CD4-positive, alpha-beta T cell (primary cell): ENCODE measurements at regions of chr15 and their contacts with region 1.

Region 1: DNA sequence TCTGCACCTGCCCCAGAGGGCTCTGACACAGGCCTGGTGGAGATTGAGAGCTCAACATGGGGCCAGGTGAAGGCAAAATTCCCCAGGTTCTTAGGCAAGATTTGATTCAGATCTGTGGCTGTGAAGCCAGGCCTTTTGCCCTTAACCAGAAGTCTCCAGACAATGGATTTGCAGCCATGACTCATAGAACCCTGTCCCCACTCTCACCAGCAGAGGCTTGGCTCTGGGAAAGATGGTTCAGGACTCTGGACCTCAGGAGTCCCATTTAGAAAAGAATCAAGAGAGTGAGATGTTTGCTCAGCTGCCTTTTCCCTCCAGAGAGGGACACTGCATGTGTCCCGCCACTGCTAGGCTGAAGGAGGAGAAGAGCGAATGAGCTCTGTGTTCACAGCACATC is 361.4 kb upstream of the ICE2 start:
- DNase-seq: peak in 4 of 14 experiments; percentile 25 to 61 (median 46)
- ATAC-seq: no peak
- H3K4me3 ChIP-seq: peak overlapping the region; percentile 59
- H3K4me3 Mint-ChIP-seq: peak overlapping the region; percentile 80
- H3K27ac ChIP-seq: peak overlapping the region; percentile 59 to 86
- H3K27ac Mint-ChIP-seq: peak overlapping the region; percentile 84
- H3K4me1 ChIP-seq: peaks cover 78% of the 10 kb centered on the region
- H3K4me1 Mint-ChIP-seq: peaks cover 97% of the 10 kb centered on the region
- H3K27me3 ChIP-seq: no peaks in the 10 kb centered on the region
- H3K27me3 Mint-ChIP-seq: no peaks in the 10 kb centered on the region
- CTCF ChIP-seq: no peak

Region 2: DNA sequence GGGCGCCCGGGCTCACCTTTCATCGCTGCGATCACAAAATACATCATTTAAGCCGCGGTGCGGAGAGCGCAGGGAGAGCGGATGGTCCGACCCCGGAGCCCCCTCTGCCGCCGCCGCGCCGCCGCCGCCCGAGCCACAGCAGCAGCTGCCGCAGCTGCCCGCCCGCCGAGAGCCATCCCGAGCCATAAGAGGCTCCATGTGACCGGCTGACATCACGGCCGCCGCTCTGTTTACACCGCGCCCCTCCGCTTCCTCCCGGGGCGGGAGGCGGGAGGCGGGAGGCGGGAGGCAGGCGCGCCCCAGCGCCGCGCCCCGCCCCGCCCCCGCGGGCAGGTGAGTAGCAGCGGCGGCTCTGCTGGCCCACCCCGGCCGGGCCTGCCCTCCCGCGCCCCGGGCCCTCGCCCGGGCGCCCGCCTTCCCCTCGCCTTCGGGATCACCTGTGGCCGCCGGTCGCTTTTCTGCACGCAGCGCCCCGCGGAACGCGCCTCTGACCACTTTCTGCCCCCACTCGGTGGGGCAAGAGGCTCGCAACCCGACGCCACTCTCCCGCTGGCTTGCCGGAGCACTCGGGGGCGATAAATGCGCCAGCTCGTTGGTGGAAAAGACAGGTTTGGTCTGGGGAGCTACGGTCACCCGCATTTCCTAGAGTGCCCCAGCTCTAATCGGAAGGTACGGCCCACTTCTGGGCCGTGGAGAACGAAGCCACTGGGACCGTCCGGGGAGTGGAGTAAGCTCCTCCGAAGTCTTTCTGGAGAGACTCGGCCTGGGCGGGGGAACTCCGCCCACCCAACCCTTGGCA is 247.7 kb before region 1 on chr15:
- CTCF ChIA-PET with region 1: interaction called, 3 read pairs
- POLR2A ChIA-PET with region 1: interaction called, 48 read pairs
- intact Hi-C with region 1: loop called in 1 of 2 experiments (anchors 5 kb)
- DNase-seq: peak; percentile 75 to 94 (median 85)
- ATAC-seq: peak; percentile 81
- H3K4me3 ChIP-seq: peak overlapping the region; percentile 84
- H3K4me3 Mint-ChIP-seq: peak overlapping the region; percentile 82
- H3K27ac ChIP-seq: peak overlapping the region; percentile 58 to 90
- H3K27ac Mint-ChIP-seq: peak overlapping the region; percentile 85
- H3K4me1 ChIP-seq: peaks cover 12% of the 10 kb centered on the region
- H3K4me1 Mint-ChIP-seq: peaks cover 39% of the 10 kb centered on the region
- H3K27me3 ChIP-seq: no peaks in the 10 kb centered on the region
- H3K27me3 Mint-ChIP-seq: no peaks in the 10 kb centered on the region
- CTCF ChIP-seq: peak; percentile 12

Region 3: DNA sequence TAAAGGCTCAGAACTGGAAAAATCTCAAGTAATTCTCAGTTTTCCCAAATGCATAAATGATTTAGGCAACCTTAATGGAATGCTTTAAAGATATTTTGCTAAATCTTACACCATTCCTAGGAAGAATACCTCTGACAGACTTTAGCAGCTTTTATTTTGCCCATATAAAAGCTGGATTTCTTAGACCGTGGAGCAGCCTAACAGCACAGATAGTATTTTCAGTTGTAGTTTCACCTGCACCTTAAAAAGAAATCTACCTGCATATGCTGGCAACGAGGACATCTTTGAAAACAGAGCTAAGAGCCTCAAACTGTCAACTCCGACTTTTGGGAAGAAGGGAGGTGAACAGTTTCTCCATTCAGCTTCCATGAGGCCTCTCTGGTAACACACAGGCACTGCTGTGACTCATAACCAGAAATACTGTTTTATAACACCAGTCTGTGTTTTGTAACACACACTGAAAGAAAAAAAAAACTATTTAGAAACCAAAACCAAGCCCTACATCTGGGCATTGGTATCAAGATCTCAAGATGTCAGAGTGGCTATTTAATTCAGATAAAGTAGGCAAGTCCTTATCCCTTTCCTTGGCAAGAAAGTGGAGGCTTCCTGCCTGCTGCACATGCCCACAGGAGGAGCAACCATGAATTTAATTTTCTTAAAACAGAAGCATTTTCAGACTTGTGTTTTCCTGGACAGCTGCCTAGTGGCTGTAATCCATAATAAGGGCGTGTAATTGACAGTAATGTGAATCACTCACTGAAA is 179.8 kb before region 1 on chr15:
- CTCF ChIA-PET with region 1: no interaction called
- POLR2A ChIA-PET with region 1: no interaction called
- intact Hi-C with region 1: no loop called
- DNase-seq: peak in 1 of 14 experiments; percentile 33
- ATAC-seq: no peak
- H3K4me3 ChIP-seq: no peak overlapping the region
- H3K4me3 Mint-ChIP-seq: no peak overlapping the region
- H3K27ac ChIP-seq: no peak overlapping the region
- H3K27ac Mint-ChIP-seq: no peak overlapping the region
- H3K4me1 ChIP-seq: peaks cover 9% of the 10 kb centered on the region
- H3K4me1 Mint-ChIP-seq: peaks cover 24% of the 10 kb centered on the region
- H3K27me3 ChIP-seq: no peaks in the 10 kb centered on the region
- H3K27me3 Mint-ChIP-seq: no peaks in the 10 kb centered on the region
- CTCF ChIP-seq: no peak

Region 4: DNA sequence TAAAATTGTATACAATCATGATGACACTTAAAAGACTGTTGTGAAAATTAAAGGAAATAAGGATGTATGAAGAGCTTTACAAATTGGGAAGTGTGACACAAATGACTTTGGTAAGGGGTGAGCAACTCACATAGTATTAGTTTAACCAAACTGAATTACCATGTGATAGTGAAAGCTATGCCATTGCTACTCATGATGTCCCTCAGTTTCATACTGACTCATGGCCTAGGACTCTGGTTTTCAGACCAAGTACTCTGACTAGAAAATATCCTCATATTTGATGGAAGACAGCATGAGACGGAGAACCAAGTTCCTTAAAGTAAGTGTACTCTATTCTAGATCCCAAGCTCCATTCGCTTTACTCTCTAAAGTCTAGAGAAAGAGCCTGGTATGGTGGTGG is 158.2 kb before region 1 on chr15:
- CTCF ChIA-PET with region 1: no interaction called
- POLR2A ChIA-PET with region 1: no interaction called
- intact Hi-C with region 1: no loop called
- DNase-seq: no peak
- ATAC-seq: no peak
- H3K4me3 ChIP-seq: no peak overlapping the region
- H3K4me3 Mint-ChIP-seq: no peak overlapping the region
- H3K27ac ChIP-seq: no peak overlapping the region
- H3K27ac Mint-ChIP-seq: no peak overlapping the region
- H3K4me1 ChIP-seq: no peaks in the 10 kb centered on the region
- H3K4me1 Mint-ChIP-seq: no peaks in the 10 kb centered on the region
- H3K27me3 ChIP-seq: no peaks in the 10 kb centered on the region
- H3K27me3 Mint-ChIP-seq: no peaks in the 10 kb centered on the region
- CTCF ChIP-seq: no peak

Region 5: GRCh38 chr15:60777558-60777957 is 62.7 kb before region 1 on chr15:
- CTCF ChIA-PET with region 1: no interaction called
- POLR2A ChIA-PET with region 1: no interaction called
- intact Hi-C with region 1: no loop called
- DNase-seq: no peak
- ATAC-seq: no peak
- H3K4me3 ChIP-seq: no peak overlapping the region
- H3K4me3 Mint-ChIP-seq: no peak overlapping the region
- H3K27ac ChIP-seq: no peak overlapping the region
- H3K27ac Mint-ChIP-seq: no peak overlapping the region
- H3K4me1 ChIP-seq: peaks cover 29% of the 10 kb centered on the region
- H3K4me1 Mint-ChIP-seq: peaks cover 64% of the 10 kb centered on the region
- H3K27me3 ChIP-seq: no peaks in the 10 kb centered on the region
- H3K27me3 Mint-ChIP-seq: no peaks in the 10 kb centered on the region
- CTCF ChIP-seq: no peak

Region 6: DNA sequence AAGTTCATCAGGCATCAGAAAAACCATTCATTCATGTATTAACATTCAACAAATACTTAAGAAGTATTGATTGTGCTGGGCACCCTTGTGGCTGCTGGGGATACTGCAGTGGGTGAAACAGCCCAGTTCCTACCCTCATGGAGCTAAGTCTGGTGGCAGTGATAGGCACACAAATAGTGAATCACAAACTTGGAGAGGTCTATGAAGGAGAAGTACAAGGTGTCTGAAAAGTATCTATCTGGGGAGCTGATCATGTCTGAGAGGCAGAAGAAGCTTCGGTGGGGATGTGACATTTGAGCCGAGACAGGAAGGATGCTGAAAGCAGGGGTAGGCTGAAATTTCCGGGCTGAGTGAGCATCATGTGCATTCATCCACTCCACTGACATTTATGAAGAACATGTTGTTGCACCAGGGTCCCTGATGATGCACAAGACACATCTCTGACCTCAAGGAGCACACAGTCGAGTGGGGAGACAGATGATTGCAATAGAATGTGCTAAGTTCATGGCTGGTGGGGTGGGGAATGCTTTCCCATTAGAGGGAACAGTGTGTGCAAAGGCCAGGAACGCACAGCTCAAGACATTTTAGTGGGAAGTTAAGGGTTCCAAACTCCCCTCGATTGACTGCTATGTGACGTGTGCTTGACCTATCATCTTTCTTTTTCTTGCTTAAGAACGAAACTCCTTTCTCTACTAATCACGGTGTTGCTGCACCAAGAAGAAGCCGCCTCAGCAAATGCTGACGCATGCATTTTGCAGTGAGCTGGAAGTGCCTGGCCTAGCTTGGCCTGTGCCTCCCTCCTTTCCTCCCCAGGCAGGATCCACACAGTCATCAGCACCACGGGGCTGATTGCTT is 52.2 kb before region 1 on chr15:
- CTCF ChIA-PET with region 1: interaction called, 8 read pairs
- POLR2A ChIA-PET with region 1: interaction called, 17 read pairs
- intact Hi-C with region 1: no loop called
- DNase-seq: peak in 12 of 14 experiments; percentile 13 to 71 (median 40)
- ATAC-seq: peak; percentile 78
- H3K4me3 ChIP-seq: no peak overlapping the region
- H3K4me3 Mint-ChIP-seq: peak overlapping the region; percentile 55
- H3K27ac ChIP-seq: peak overlapping the region in 1 of 2 donors; percentile 56
- H3K27ac Mint-ChIP-seq: peak overlapping the region; percentile 84
- H3K4me1 ChIP-seq: peaks cover 36% of the 10 kb centered on the region
- H3K4me1 Mint-ChIP-seq: peaks cover 34% of the 10 kb centered on the region
- H3K27me3 ChIP-seq: no peaks in the 10 kb centered on the region
- H3K27me3 Mint-ChIP-seq: no peaks in the 10 kb centered on the region
- CTCF ChIP-seq: peak; percentile 66

Region 7: GRCh38 chr15:60804986-60805949 is 35.0 kb before region 1 on chr15:
- CTCF ChIA-PET with region 1: no interaction called
- POLR2A ChIA-PET with region 1: interaction called, 17 read pairs
- intact Hi-C with region 1: loop called (anchors 5 kb)
- DNase-seq: no peak
- ATAC-seq: no peak
- H3K4me3 ChIP-seq: no peak overlapping the region
- H3K4me3 Mint-ChIP-seq: peak overlapping the region; percentile 37
- H3K27ac ChIP-seq: no peak overlapping the region
- H3K27ac Mint-ChIP-seq: peak overlapping the region; percentile 83
- H3K4me1 ChIP-seq: peaks cover 58% of the 10 kb centered on the region
- H3K4me1 Mint-ChIP-seq: peaks cover 92% of the 10 kb centered on the region
- H3K27me3 ChIP-seq: no peaks in the 10 kb centered on the region
- H3K27me3 Mint-ChIP-seq: no peaks in the 10 kb centered on the region
- CTCF ChIP-seq: no peak

Region 8: GRCh38 chr15:60865507-60865906 is 25.2 kb after region 1 on chr15:
- CTCF ChIA-PET with region 1: interaction called, 4 read pairs
- POLR2A ChIA-PET with region 1: interaction called, 16 read pairs
- intact Hi-C with region 1: no loop called
- DNase-seq: no peak
- ATAC-seq: no peak
- H3K4me3 ChIP-seq: no peak overlapping the region
- H3K4me3 Mint-ChIP-seq: no peak overlapping the region
- H3K27ac ChIP-seq: no peak overlapping the region
- H3K27ac Mint-ChIP-seq: no peak overlapping the region
- H3K4me1 ChIP-seq: no peaks in the 10 kb centered on the region
- H3K4me1 Mint-ChIP-seq: peaks cover 18% of the 10 kb centered on the region
- H3K27me3 ChIP-seq: no peaks in the 10 kb centered on the region
- H3K27me3 Mint-ChIP-seq: no peaks in the 10 kb centered on the region
- CTCF ChIP-seq: no peak

Region 9: DNA sequence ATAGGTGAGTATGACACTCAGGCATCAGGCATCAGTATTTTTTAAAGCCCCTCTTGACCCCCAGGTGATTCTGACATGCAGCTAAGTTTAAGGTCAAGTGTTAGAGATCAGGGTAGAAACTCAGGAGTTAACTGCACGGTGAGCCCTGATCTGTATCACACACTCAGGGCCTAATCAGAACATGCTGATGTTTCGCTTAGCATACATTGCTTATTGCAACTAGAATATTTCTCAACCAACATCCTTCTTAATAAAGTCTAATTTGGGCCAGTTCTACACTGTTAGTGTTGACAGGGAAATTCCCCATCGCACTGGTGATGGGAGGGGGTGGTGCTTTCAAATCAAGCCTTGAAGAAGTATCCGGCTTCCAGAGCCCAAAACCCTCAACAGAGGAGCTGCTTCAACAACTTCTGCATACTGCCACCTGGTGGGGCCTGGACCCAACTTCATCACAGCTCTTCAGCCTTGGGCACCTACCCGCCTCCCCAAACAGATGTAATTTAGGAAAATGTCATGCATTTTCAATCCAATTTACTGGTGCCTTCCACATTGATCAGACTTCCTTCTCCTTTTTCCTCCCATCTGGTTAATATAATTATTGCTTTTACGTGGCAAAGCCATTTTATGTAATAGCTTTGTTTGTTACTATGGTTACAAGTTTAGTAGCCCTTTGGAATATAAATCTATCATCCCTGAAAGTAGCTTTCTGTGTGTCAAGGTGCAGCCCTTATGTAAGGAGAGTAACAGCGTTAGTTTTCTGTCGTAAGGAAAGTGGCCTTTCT is 76.6 kb after region 1 on chr15:
- CTCF ChIA-PET with region 1: interaction called, 4 read pairs
- POLR2A ChIA-PET with region 1: interaction called, 11 read pairs
- intact Hi-C with region 1: loop called in 1 of 2 experiments (anchors 2 kb)
- DNase-seq: peak; percentile 76 to 96 (median 84)
- ATAC-seq: peak; percentile 98
- H3K4me3 ChIP-seq: no peak overlapping the region
- H3K4me3 Mint-ChIP-seq: no peak overlapping the region
- H3K27ac ChIP-seq: no peak overlapping the region
- H3K27ac Mint-ChIP-seq: peak overlapping the region; percentile 50
- H3K4me1 ChIP-seq: peaks cover 12% of the 10 kb centered on the region
- H3K4me1 Mint-ChIP-seq: peaks cover 17% of the 10 kb centered on the region
- H3K27me3 ChIP-seq: no peaks in the 10 kb centered on the region
- H3K27me3 Mint-ChIP-seq: no peaks in the 10 kb centered on the region
- CTCF ChIP-seq: peak; percentile 84